ENCODE measurements at regions of chr4 and their contacts with region 1.

Region 1: GRCh38 chr4:156968479-156968984 is 3.1 kb downstream of the PDGFC start:
- DNase-seq: no peak
- H3K4me3 ChIP-seq: peak overlapping the region; percentile 94
- H3K27ac ChIP-seq: peak overlapping the region; percentile 13
- H3K27me3 ChIP-seq: no peaks in the 10 kb centered on the region
- CTCF ChIP-seq: peak; percentile 87

Region 2: GRCh38 chr4:156475322-156475721 is 493.2 kb before region 1 on chr4:
- CTCF ChIA-PET with region 1: interaction called, 30 read pairs
- POLR2A ChIA-PET with region 1: interaction called, 6 read pairs
- DNase-seq: peak; percentile 4
- H3K4me3 ChIP-seq: no peak overlapping the region
- H3K27ac ChIP-seq: no peak overlapping the region
- H3K27me3 ChIP-seq: no peaks in the 10 kb centered on the region
- CTCF ChIP-seq: peak; percentile 44

Region 3: DNA sequence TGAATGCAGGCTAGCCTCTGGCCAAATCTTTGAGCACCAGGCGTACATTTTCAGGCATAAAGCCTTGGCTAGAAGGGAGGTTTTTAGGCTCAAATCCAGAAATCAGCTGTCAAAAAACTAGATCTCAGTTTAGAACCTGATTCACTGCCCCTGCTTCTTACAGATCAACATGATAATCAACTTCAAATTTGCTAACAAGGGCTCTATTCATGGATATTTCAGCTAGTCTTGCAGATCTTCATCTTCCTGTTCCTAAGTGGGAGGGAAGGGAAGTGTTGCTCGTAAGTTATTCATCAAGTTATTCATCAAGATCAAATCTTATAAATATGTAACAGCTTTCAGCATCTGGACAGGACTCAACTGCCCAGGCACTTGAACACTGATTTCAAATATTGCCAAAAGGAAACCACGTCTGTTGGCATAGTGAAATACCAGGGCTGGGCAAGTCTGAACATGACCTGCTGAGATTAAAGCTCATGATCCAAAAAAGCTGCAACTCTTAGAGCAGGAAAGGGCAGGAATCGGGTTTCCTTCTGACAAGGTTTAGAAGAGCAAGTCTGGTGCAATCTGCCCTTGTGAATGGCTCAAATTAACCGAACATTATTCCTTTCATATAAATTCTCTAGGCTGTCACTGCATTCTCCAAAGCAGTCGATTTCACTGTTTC is 197.2 kb before region 1 on chr4:
- CTCF ChIA-PET with region 1: interaction called, 14 read pairs
- POLR2A ChIA-PET with region 1: interaction called, 4 read pairs
- DNase-seq: no peak
- H3K4me3 ChIP-seq: no peak overlapping the region
- H3K27ac ChIP-seq: peak overlapping the region; percentile 79
- H3K27me3 ChIP-seq: no peaks in the 10 kb centered on the region
- CTCF ChIP-seq: no peak

Region 4: GRCh38 chr4:156870861-156871260 is 97.7 kb before region 1 on chr4:
- CTCF ChIA-PET with region 1: interaction called, 11 read pairs
- POLR2A ChIA-PET with region 1: no interaction called
- DNase-seq: no peak
- H3K4me3 ChIP-seq: no peak overlapping the region
- H3K27ac ChIP-seq: no peak overlapping the region
- H3K27me3 ChIP-seq: no peaks in the 10 kb centered on the region
- CTCF ChIP-seq: no peak

Region 5: GRCh38 chr4:156983366-156983765 is 14.8 kb after region 1 on chr4:
- CTCF ChIA-PET with region 1: interaction called, 14 read pairs
- POLR2A ChIA-PET with region 1: no interaction called
- DNase-seq: no peak
- H3K4me3 ChIP-seq: no peak overlapping the region
- H3K27ac ChIP-seq: no peak overlapping the region
- H3K27me3 ChIP-seq: no peaks in the 10 kb centered on the region
- CTCF ChIP-seq: peak; percentile 71